ENCODE measurements at regions of chrX and their contacts with region 1.

Region 1: GRCh38 chrX:120213436-120214265 is 37.0 kb upstream of the ZBTB33 start:
- DNase-seq: peak; percentile 60
- H3K4me3 Mint-ChIP-seq: no peak overlapping the region
- H3K27ac Mint-ChIP-seq: no peak overlapping the region
- H3K4me1 Mint-ChIP-seq: peaks cover 6% of the 10 kb centered on the region
- H3K27me3 Mint-ChIP-seq: no peaks in the 10 kb centered on the region

Region 2: GRCh38 chrX:119981286-119982070 is 232.2 kb before region 1 on chrX:
- CTCF ChIA-PET with region 1: interaction called, 11 read pairs
- POLR2A ChIA-PET with region 1: no interaction called
- intact Hi-C with region 1: no loop called
- DNase-seq: peak; percentile 29
- H3K4me3 Mint-ChIP-seq: no peak overlapping the region
- H3K27ac Mint-ChIP-seq: no peak overlapping the region
- H3K4me1 Mint-ChIP-seq: no peaks in the 10 kb centered on the region
- H3K27me3 Mint-ChIP-seq: peaks cover 5% of the 10 kb centered on the region

Region 3: DNA sequence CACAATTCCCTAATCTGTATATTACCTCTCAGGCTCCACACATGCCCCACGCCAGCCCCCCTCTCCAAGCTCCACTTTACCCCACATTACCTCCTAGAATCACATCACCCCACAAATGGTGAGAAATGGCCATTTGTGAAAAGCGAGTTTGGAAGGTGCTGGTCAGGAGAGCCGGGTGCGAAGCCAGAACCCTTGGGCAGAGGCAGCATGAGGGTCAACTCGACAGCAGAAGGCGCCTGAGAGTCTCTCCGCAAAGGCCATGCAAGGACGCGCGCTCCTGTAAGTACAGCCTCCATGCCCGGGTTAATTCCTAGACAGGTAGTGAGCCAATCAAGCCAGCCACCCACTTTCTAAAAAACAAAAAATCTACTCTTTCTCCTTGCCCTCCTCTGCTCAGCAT is 12.8 kb before region 1 on chrX:
- CTCF ChIA-PET with region 1: interaction called, 15 read pairs
- POLR2A ChIA-PET with region 1: no interaction called
- intact Hi-C with region 1: no loop called
- DNase-seq: no peak
- H3K4me3 Mint-ChIP-seq: no peak overlapping the region
- H3K27ac Mint-ChIP-seq: no peak overlapping the region
- H3K4me1 Mint-ChIP-seq: no peaks in the 10 kb centered on the region
- H3K27me3 Mint-ChIP-seq: no peaks in the 10 kb centered on the region

Region 4: DNA sequence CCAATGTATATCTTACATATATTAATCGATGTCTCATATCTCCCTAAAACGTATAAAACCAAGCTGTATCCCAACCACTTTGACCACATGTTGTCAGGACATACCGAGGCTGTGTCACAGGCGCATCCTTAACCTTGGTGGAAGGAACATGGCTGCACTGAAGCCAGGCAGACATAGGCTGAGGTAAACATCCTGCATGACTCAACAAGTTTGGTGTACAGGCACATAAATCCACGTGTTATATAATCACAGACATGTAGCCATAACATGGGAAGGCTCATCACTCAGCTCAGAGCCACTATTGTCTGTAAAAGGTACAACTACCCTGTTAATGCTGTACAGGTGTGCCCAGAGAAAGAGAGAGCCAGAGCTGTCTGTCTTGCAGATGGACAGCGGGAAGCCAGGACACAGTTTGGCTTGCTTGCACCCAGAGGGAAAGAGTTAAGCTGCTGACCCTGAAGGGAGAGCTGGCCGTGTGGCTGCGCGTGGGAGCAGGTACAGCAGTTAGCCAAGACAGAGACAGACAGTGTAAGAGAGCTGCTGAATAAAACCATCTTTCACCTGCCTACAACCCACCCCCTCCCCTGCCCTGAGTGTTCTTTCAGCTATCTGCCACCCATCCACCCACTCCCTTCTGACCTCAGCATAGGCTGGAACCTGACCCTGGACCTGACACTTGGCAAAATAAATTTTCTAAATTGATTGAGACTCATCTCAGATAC is 14.7 kb after region 1 on chrX:
- CTCF ChIA-PET with region 1: interaction called, 10 read pairs
- POLR2A ChIA-PET with region 1: no interaction called
- intact Hi-C with region 1: no loop called
- DNase-seq: no peak
- H3K4me3 Mint-ChIP-seq: no peak overlapping the region
- H3K27ac Mint-ChIP-seq: no peak overlapping the region
- H3K4me1 Mint-ChIP-seq: peaks cover 2% of the 10 kb centered on the region
- H3K27me3 Mint-ChIP-seq: no peaks in the 10 kb centered on the region

Region 5: DNA sequence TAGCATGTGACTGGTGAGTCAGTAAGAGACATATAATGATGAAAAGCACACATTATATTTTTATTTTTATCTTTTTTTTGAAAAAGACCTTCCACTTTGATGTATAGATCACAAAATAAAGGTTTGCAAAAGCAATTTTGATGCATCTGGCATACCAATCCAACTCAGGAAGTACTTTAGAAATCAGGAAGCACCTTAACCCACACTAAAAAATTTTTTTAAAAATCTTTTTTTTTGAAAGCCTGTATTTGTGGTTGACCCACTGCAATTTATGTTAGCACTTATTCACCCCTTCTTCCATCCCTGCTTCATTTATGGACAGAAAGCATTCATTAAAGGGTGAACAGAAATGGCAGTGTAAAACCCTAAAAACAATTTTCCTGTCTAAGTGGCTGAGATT is 81.0 kb after region 1 on chrX:
- CTCF ChIA-PET with region 1: no interaction called
- POLR2A ChIA-PET with region 1: no interaction called
- intact Hi-C with region 1: no loop called
- DNase-seq: no peak
- H3K4me3 Mint-ChIP-seq: no peak overlapping the region
- H3K27ac Mint-ChIP-seq: peak overlapping the region; percentile 33
- H3K4me1 Mint-ChIP-seq: peaks cover 7% of the 10 kb centered on the region
- H3K27me3 Mint-ChIP-seq: no peaks in the 10 kb centered on the region

Measured in activated CD4-positive, alpha-beta memory T cell treated with anti-CD3 and anti-CD28 coated beads for 36 hours (primary cell).